Activated CD4-positive, alpha-beta memory T cell treated with anti-CD3 and anti-CD28 coated beads for 36 hours (primary cell): ENCODE measurements at regions of chr12 and their contacts with region 1.

Region 1: GRCh38 chr12:21677622-21678277 is 20.1 kb upstream of the LDHB start:
- DNase-seq: peak; percentile 28
- H3K4me3 Mint-ChIP-seq: peak overlapping the region; percentile 24
- H3K27ac Mint-ChIP-seq: peak overlapping the region; percentile 69
- H3K4me1 Mint-ChIP-seq: peaks cover 48% of the 10 kb centered on the region
- H3K27me3 Mint-ChIP-seq: no peaks in the 10 kb centered on the region

Region 2: DNA sequence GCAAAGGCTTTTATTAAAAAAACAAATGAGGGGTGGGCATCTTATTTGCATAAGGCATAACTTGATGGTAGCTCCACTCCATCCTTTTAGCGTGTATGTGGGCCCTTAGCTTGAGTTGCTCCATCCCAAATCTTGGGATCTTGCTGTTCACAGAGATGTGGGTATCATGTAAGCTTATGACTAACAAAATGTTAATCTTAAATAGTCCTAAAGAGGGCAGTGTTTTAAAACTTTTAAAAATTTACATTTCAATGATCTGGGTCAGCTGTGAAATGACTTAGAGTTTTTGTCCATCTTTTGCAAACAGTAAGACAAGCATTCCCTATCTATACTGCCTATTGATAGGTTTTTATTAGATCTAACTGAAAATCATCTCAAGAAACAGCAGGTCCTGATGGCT is 429.1 kb before region 1 on chr12:
- CTCF ChIA-PET with region 1: interaction called, 17 read pairs
- POLR2A ChIA-PET with region 1: no interaction called
- intact Hi-C with region 1: loop called (anchors 2 kb)
- DNase-seq: no peak
- H3K4me3 Mint-ChIP-seq: no peak overlapping the region
- H3K27ac Mint-ChIP-seq: no peak overlapping the region
- H3K4me1 Mint-ChIP-seq: no peaks in the 10 kb centered on the region
- H3K27me3 Mint-ChIP-seq: no peaks in the 10 kb centered on the region

Region 3: DNA sequence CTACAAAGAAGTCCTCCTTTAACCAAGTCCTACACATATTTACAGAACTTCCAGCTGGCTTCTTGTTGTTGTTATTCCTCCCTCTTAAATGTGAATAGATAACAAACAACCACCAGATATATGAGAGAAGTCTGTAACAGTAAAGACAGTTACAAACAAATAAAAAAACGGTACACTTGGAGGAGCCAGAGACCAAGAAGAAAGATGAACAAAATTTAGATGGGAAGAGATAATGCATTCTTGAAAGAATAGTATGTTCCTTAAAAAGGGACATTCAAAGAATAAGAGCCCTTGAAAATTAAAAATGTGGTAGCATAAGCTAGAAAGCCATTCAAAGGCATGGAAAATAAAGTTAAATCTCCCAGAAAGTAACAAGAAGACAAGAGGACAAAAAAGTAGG is 369.0 kb before region 1 on chr12:
- CTCF ChIA-PET with region 1: interaction called, 4 read pairs
- POLR2A ChIA-PET with region 1: no interaction called
- intact Hi-C with region 1: loop called (anchors 1 kb)
- DNase-seq: no peak
- H3K4me3 Mint-ChIP-seq: no peak overlapping the region
- H3K27ac Mint-ChIP-seq: no peak overlapping the region
- H3K4me1 Mint-ChIP-seq: no peaks in the 10 kb centered on the region
- H3K27me3 Mint-ChIP-seq: no peaks in the 10 kb centered on the region

Region 4: GRCh38 chr12:21451529-21451928 is 226.2 kb before region 1 on chr12:
- CTCF ChIA-PET with region 1: interaction called, 3 read pairs
- POLR2A ChIA-PET with region 1: no interaction called
- intact Hi-C with region 1: loop called (anchors 1 kb)
- DNase-seq: no peak
- H3K4me3 Mint-ChIP-seq: no peak overlapping the region
- H3K27ac Mint-ChIP-seq: no peak overlapping the region
- H3K4me1 Mint-ChIP-seq: peaks cover 40% of the 10 kb centered on the region
- H3K27me3 Mint-ChIP-seq: no peaks in the 10 kb centered on the region

Region 5: GRCh38 chr12:21476949-21477348 is 200.8 kb before region 1 on chr12:
- CTCF ChIA-PET with region 1: no interaction called
- POLR2A ChIA-PET with region 1: no interaction called
- intact Hi-C with region 1: no loop called
- DNase-seq: no peak
- H3K4me3 Mint-ChIP-seq: no peak overlapping the region
- H3K27ac Mint-ChIP-seq: peak overlapping the region; percentile 73
- H3K4me1 Mint-ChIP-seq: peaks cover 14% of the 10 kb centered on the region
- H3K27me3 Mint-ChIP-seq: no peaks in the 10 kb centered on the region

Region 6: DNA sequence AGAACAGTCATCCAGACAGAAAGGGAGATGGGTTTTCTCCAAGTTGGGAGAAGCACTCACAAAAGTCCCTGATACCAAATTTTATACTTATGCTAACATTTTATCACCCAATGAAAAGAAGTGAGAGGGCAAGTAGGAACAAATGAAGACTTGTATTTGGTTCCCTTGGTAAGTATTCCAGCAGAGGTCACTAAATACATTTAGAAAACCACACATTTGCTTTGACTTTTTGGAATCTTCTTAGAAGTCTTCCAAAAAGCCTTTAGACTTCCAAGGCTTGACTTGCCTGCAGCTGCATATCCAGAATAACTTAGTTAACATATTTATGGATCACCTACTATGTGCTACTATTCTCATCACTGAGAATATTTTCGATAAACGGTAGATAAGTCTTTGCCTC is 70.0 kb before region 1 on chr12:
- CTCF ChIA-PET with region 1: interaction called, 10 read pairs
- POLR2A ChIA-PET with region 1: no interaction called
- intact Hi-C with region 1: loop called (anchors 1 kb)
- DNase-seq: no peak
- H3K4me3 Mint-ChIP-seq: no peak overlapping the region
- H3K27ac Mint-ChIP-seq: no peak overlapping the region
- H3K4me1 Mint-ChIP-seq: peaks cover 2% of the 10 kb centered on the region
- H3K27me3 Mint-ChIP-seq: no peaks in the 10 kb centered on the region

Region 7: DNA sequence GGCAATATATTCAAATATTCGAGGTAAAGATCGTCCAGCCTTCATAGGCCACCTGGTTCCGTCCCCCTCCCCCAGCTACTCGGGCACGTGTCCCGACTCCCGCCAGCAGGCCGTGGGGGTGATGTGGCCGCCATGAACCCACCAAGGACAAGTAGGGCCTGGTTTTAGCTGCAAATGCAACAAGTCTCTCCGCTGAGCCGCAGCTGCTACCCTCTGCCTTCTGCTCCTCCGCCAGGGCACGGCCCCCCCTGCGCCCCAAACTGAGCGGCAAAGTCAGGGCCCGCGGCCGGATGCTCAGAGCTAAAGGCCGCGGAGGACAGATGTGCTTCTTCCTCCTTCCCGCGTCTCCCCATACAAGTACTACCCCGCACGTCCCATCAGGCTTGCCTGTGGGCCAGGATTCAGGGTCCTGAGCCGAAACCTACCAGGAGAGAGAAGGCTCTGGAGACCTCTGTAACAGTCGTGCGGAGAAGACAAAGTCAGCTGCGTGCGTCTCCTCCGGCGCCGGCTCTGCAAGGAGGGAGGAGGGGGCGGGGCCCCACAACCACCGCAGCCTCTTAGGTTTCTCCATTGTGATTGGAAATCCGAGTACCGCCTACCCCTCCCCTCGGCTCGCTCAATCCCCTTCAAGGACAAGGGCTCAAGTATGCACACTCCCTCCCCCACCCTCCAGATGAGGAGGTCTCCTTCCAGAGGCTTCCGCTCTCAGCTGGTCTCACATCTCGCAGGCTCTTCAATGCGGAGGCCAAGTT is 20.2 kb before region 1 on chr12 and contains the start of gene LDHB:
- CTCF ChIA-PET with region 1: interaction called, 17 read pairs
- POLR2A ChIA-PET with region 1: interaction called, 28 read pairs
- intact Hi-C with region 1: loop called (anchors 1 kb)
- DNase-seq: peak; percentile 98
- H3K4me3 Mint-ChIP-seq: peak within 1 kb of the TSS; percentile 98
- H3K27ac Mint-ChIP-seq: peak within 1 kb of the TSS; percentile 95
- H3K4me1 Mint-ChIP-seq: peaks cover 60% of the 10 kb centered on the region
- H3K27me3 Mint-ChIP-seq: no peaks in the 10 kb centered on the region
- total RNA-seq, gene LDHB: 1,684 to 1,884 TPM

Region 8: DNA sequence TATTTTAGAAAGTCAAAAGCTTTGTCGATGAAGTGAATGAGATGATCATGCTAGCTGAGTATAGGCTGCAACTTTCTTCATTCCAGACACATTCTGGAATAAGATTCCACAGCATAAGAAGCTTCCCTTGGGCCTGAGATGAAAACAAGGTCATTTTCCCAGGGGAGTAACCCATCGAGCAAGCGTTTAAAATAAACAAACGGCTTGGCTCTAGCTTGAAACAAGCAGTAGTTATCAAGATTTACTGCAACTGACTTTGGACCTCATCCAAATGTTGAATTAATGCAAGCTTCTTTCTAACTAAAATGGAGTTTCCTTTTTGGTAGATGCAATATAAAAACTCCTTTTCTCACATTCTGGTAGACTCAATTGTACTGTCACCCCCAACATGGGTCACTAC is 73.8 kb after region 1 on chr12:
- CTCF ChIA-PET with region 1: no interaction called
- POLR2A ChIA-PET with region 1: no interaction called
- intact Hi-C with region 1: no loop called
- DNase-seq: no peak
- H3K4me3 Mint-ChIP-seq: no peak overlapping the region
- H3K27ac Mint-ChIP-seq: no peak overlapping the region
- H3K4me1 Mint-ChIP-seq: no peaks in the 10 kb centered on the region
- H3K27me3 Mint-ChIP-seq: peaks cover 9% of the 10 kb centered on the region

Region 9: GRCh38 chr12:21764065-21764464 is 86.3 kb after region 1 on chr12:
- CTCF ChIA-PET with region 1: no interaction called
- POLR2A ChIA-PET with region 1: no interaction called
- intact Hi-C with region 1: no loop called
- DNase-seq: no peak
- H3K4me3 Mint-ChIP-seq: no peak overlapping the region
- H3K27ac Mint-ChIP-seq: no peak overlapping the region
- H3K4me1 Mint-ChIP-seq: no peaks in the 10 kb centered on the region
- H3K27me3 Mint-ChIP-seq: no peaks in the 10 kb centered on the region